B cell (primary cell): ENCODE measurements at regions of chr18 and their contacts with region 1.

Region 1: DNA sequence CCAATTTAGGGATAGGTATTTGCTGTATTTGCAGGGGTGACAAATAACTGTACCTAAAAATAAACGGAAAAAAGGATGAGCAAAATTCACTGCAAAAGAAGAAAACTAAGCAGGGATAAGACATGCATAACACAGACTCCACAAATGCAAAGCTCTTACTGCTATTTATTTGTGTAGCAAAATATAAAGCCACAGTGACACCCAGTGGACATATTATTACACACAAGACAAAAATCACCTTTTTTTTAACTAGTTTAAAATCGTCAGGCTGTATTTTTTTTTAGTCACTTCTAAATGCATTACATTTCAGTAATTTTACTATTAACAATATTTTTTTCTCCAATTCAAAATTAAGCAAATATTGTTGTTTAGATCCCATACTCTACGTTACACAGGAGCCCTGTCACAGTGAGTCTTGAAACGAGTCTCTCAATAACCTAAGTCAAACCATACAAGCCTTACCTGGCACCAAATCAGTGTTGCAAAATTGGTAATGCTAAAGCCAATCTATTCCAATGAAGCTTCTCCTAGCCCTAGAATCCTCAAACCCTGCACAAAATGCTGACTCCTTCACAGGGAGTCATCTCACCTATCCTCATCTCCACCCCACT is 23.7 kb downstream of the METTL4 start:
- DNase-seq: peak; percentile 61
- ATAC-seq: peak; percentile 33
- H3K4me3 ChIP-seq: no peak overlapping the region
- H3K4me3 Mint-ChIP-seq: no peak overlapping the region
- H3K27ac ChIP-seq: no peak overlapping the region
- H3K27ac Mint-ChIP-seq: peak overlapping the region; percentile 18
- H3K4me1 ChIP-seq: peaks cover 0 to 2% of the 10 kb centered on the region in 2 donors
- H3K4me1 Mint-ChIP-seq: peaks cover 10% of the 10 kb centered on the region
- H3K27me3 ChIP-seq: no peaks in the 10 kb centered on the region
- H3K27me3 Mint-ChIP-seq: no peaks in the 10 kb centered on the region
- CTCF ChIP-seq: peak; percentile 81

Region 2: DNA sequence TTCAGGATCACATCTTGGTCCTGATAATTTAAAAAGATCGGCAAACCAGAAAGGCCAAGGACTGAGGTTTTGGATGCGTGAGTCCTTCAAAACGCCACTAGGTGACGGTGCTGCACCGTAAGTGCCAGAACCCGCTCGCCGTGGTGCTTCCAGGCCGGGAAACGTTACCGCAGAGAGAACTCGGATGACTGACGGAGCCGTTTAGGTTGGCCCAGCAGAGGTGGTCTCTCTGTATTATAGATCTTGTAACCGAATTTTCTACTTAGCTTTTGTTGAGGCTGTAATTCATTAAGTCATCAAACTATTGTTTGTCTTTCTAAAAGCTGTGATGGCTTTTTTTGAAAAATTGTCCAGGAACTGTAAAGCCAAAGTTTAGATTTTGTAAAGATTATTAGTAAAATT is 1682.7 kb before region 1 on chr18:
- CTCF ChIA-PET with region 1: interaction called, 4 read pairs
- POLR2A ChIA-PET with region 1: no interaction called
- intact Hi-C with region 1: loop called (anchors 2 kb)
- DNase-seq: peak; percentile 50
- ATAC-seq: no peak
- H3K4me3 ChIP-seq: no peak overlapping the region
- H3K4me3 Mint-ChIP-seq: no peak overlapping the region
- H3K27ac ChIP-seq: no peak overlapping the region
- H3K27ac Mint-ChIP-seq: no peak overlapping the region
- H3K4me1 ChIP-seq: peaks cover 0 to 4% of the 10 kb centered on the region in 2 donors
- H3K4me1 Mint-ChIP-seq: peaks cover 3% of the 10 kb centered on the region
- H3K27me3 ChIP-seq: peaks cover 0 to 2% (median 0%) of the 10 kb centered on the region in 4 experiments
- H3K27me3 Mint-ChIP-seq: peaks cover 28% of the 10 kb centered on the region
- CTCF ChIP-seq: peak; percentile 67

Region 3: DNA sequence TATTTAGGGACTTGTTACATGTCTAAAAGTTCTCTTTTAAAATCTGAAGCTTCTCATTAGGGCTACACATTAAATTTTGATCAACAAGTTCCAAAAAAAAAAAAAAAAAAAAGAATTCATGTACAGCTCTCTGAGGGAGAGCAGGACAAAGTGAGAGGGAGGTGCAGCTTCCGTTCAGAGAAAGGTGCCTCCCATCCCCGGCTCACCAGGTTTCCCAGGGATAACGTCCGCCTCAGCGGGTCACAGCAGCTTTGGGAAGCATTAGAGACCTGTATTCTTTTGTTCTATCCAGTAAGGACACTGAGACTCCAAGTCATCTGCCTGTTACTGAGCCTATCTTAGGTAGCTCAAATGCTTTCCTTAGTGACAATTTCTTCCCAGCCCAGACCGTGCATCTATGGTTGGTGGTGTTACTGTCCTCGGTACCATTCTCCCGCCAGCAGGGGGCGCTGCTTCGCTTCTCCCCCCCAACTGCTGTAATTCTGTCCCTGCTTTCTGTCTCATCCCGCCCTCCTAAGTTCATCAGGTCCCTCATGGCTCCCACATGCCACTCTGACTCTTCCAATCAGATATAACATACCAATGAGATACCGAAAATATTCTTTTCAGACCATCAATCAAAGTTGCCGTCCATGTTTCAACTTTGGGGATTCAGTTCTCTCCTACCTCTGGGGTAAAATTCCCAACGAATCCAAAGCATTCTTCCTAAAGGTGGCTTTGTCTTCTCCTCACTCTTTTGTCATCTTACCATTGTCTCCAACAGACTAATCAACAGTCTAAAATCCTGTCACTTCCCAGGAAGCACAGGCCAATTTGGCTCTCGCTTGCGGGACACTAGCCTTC is 442.7 kb before region 1 on chr18:
- CTCF ChIA-PET with region 1: interaction called, 30 read pairs
- POLR2A ChIA-PET with region 1: no interaction called
- intact Hi-C with region 1: loop called (anchors 1 kb)
- DNase-seq: peak; percentile 44
- ATAC-seq: peak; percentile 56
- H3K4me3 ChIP-seq: no peak overlapping the region
- H3K4me3 Mint-ChIP-seq: no peak overlapping the region
- H3K27ac ChIP-seq: no peak overlapping the region
- H3K27ac Mint-ChIP-seq: no peak overlapping the region
- H3K4me1 ChIP-seq: no peaks in the 10 kb centered on the region
- H3K4me1 Mint-ChIP-seq: peaks cover 6% of the 10 kb centered on the region
- H3K27me3 ChIP-seq: no peaks in the 10 kb centered on the region
- H3K27me3 Mint-ChIP-seq: peaks cover 2% of the 10 kb centered on the region
- CTCF ChIP-seq: peak; percentile 75

Region 4: GRCh38 chr18:2337552-2338141 is 209.9 kb before region 1 on chr18:
- CTCF ChIA-PET with region 1: interaction called, 89 read pairs
- POLR2A ChIA-PET with region 1: no interaction called
- intact Hi-C with region 1: loop called (anchors 1 kb)
- DNase-seq: peak; percentile 52
- ATAC-seq: peak; percentile 54
- H3K4me3 ChIP-seq: no peak overlapping the region
- H3K4me3 Mint-ChIP-seq: no peak overlapping the region
- H3K27ac ChIP-seq: no peak overlapping the region
- H3K27ac Mint-ChIP-seq: no peak overlapping the region
- H3K4me1 ChIP-seq: no peaks in the 10 kb centered on the region
- H3K4me1 Mint-ChIP-seq: no peaks in the 10 kb centered on the region
- H3K27me3 ChIP-seq: peaks cover 0 to 4% (median 0%) of the 10 kb centered on the region in 4 experiments
- H3K27me3 Mint-ChIP-seq: peaks cover 33% of the 10 kb centered on the region
- CTCF ChIP-seq: peak; percentile 76